ENCODE measurements at regions of chr5 and their contacts with region 1.

Region 1: DNA sequence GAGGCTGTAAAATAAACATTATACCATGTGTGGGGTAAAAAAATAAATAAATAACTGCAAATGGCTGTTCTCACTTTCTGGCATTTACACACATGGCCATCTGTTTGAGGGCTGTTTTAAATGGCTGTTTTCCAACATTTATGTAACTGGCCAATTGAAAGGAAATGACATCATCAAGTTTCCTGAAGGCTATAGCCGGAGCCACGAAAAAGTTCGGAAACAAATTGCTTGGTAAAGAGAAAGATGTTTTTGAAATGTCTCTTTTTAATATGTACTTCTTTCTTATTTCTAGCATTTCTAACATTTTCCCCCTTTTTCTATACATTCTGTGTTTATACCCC is 95.4 kb upstream of the DAB2 start:
- DNase-seq: peak; percentile 95
- ATAC-seq: peak; percentile 22
- H3K4me3 ChIP-seq: no peak overlapping the region
- H3K27ac ChIP-seq: peak overlapping the region; percentile 83; the same call in 1 of the 2 replicates
- H3K4me1 ChIP-seq: peaks cover 14% of the 10 kb centered on the region
- H3K27me3 ChIP-seq: no peaks in the 10 kb centered on the region
- CTCF ChIP-seq: no peak
- POLR2A ChIP-seq: no peak
- RAD21 ChIP-seq: no peak

Region 2: GRCh38 chr5:39411051-39411450 is 109.2 kb before region 1 on chr5:
- CTCF ChIA-PET with region 1: no interaction called
- POLR2A ChIA-PET with region 1: no interaction called
- dilution Hi-C with region 1: no loop called
- in situ Hi-C with region 1: no loop called
- intact Hi-C with region 1: no loop called
- DNase-seq: peak; percentile 84
- ATAC-seq: peak; percentile 66
- H3K4me3 ChIP-seq: no peak overlapping the region
- H3K27ac ChIP-seq: no peak overlapping the region
- H3K4me1 ChIP-seq: peaks cover 30% of the 10 kb centered on the region
- H3K27me3 ChIP-seq: no peaks in the 10 kb centered on the region
- CTCF ChIP-seq: no peak
- POLR2A ChIP-seq: no peak
- RAD21 ChIP-seq: no peak

Region 3: GRCh38 chr5:39475881-39476842 is 44.0 kb before region 1 on chr5:
- CTCF ChIA-PET with region 1: interaction called, 3 read pairs
- POLR2A ChIA-PET with region 1: no interaction called
- dilution Hi-C with region 1: no loop called
- in situ Hi-C with region 1: no loop called
- intact Hi-C with region 1: loop called (anchors 5 kb)
- DNase-seq: peak; percentile 86
- ATAC-seq: peak; percentile 42
- H3K4me3 ChIP-seq: no peak overlapping the region
- H3K27ac ChIP-seq: peak overlapping the region; percentile 87; the same call in 1 of the 2 replicates
- H3K4me1 ChIP-seq: peaks cover 11% of the 10 kb centered on the region
- H3K27me3 ChIP-seq: no peaks in the 10 kb centered on the region
- CTCF ChIP-seq: no peak; the same call in 1 of the 2 replicates
- POLR2A ChIP-seq: no peak
- RAD21 ChIP-seq: no peak

Measured in IMR-90 (cell line).